Activated CD8-positive, alpha-beta memory T cell treated with anti-CD3 and anti-CD28 coated beads, Interleukin-2, amount 10 ng/mL, durations not matched to agents 7 days and 5 days (primary cell): ENCODE measurements at regions of chr3 and their contacts with region 1.

Region 1: DNA sequence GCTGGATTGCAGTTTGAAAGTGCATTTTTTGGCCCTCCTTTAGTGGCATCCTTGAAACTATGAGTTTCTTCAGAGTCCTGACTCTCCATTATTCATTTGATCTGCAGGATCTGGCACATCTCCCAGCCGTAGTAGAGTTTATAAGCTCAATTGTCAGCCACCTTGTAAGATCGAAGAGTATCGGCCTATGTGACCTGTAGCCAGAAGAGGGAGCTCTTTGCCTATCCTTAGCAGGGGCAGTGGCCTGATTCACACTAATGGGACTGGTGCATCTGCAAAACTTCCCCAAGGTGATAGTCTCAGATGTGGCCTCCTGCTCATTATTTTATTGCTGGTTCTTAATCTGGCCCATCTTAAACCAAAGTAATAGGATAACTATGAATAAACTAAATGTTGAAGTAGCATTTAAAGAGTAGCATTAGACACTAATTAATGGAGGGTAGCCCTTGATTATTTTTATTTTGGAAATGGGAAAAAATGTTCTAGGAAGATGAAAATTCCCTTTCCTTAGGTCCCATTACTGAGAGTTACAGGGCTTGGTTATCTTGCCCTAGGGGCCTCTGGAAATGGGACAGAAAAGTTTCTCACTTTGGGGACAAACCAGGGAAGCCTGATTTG is 21.2 kb downstream of the GCSAM start:
- DNase-seq: peak; percentile 76
- ATAC-seq: peak; percentile 91
- H3K4me3 Mint-ChIP-seq: no peak overlapping the region
- H3K27ac Mint-ChIP-seq: no peak overlapping the region
- H3K4me1 Mint-ChIP-seq: peaks cover 22% of the 10 kb centered on the region
- H3K27me3 Mint-ChIP-seq: no peaks in the 10 kb centered on the region

Region 2: DNA sequence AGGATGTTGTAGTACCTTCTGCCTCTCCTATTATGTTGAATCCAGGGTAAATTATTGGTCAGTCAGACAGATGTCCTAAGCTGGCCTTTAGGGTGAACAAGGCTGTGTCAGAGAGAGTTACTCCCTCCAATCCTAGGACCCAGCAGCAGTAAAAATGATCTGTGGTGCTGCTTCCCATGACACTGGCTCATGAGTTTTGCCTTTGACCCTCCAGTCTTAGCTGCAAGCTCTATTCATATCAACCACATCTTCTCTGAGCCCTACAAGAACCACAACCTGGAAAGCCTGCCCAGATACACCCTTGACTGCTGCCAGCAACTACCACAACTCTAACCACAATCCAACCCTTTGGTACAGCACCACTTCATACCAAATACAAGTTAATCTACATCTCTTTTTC is 280.1 kb before region 1 on chr3:
- CTCF ChIA-PET with region 1: no interaction called
- DNase-seq: peak; percentile 73
- ATAC-seq: peak; percentile 82
- H3K4me3 Mint-ChIP-seq: peak overlapping the region; percentile 46
- H3K27ac Mint-ChIP-seq: peak overlapping the region; percentile 79
- H3K4me1 Mint-ChIP-seq: peaks cover 11% of the 10 kb centered on the region
- H3K27me3 Mint-ChIP-seq: no peaks in the 10 kb centered on the region

Region 3: DNA sequence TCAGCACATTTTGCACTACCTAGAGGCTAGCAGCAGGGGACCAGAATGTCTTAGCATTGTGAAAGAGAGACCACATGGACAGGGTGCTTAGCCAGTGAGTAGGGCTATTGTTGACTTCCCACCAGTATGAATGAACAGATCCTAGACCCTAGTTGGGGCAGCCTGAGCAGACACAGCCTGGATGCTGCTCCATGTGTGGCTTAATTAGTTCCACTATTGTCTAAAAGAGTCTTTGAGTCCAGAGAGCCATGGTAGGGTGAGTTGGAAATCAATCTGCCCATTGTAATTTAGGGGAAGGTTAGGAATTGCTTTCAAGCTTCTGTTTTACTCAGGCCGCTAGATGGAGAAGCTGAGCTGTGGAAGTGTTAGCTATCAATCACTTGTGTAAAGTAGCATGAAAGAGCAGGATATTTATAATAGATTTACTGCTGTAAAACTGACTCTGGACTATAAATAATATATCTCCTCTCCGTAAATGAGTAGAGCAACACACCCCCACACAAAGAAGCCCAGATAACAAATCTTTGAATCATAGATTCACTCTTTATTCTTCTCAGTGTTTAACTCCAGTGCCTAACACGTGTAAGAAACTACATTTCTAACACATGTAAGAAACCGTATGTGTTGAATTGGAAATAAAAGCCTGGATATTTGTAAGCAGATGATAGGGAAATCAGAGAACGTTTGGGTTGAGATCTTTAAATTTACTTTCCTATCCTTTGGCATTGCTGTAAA is 25.2 kb after region 1 on chr3:
- CTCF ChIA-PET with region 1: interaction called, 19 read pairs
- DNase-seq: peak; percentile 65
- ATAC-seq: no peak
- H3K4me3 Mint-ChIP-seq: no peak overlapping the region
- H3K27ac Mint-ChIP-seq: no peak overlapping the region
- H3K4me1 Mint-ChIP-seq: peaks cover 38% of the 10 kb centered on the region
- H3K27me3 Mint-ChIP-seq: no peaks in the 10 kb centered on the region